ENCODE measurements at regions of chr1 and their contacts with region 1.

Region 1: GRCh38 chr1:30911046-30911954 is 2.7 kb upstream of the SDC3 start:
- DNase-seq: peak; percentile 71 to 75
- H3K4me3 ChIP-seq: no peak overlapping the region
- H3K4me3 Mint-ChIP-seq: no peak overlapping the region
- H3K27ac Mint-ChIP-seq: no peak overlapping the region
- H3K4me1 ChIP-seq: no peaks in the 10 kb centered on the region
- H3K4me1 Mint-ChIP-seq: no peaks in the 10 kb centered on the region
- H3K27me3 ChIP-seq: no peaks in the 10 kb centered on the region; the same call in 1 of the 2 replicates
- H3K27me3 Mint-ChIP-seq: no peaks in the 10 kb centered on the region
- CTCF ChIP-seq: peak; percentile 67 to 69

Region 2: GRCh38 chr1:30718636-30719405 is 192.5 kb before region 1 on chr1:
- CTCF ChIA-PET with region 1: interaction called, 10 read pairs
- POLR2A ChIA-PET with region 1: no interaction called
- intact Hi-C with region 1: loop called (anchors 1 kb)
- DNase-seq: peak in 1 of 2 experiments; percentile 90
- H3K4me3 ChIP-seq: peak overlapping the region; percentile 75
- H3K4me3 Mint-ChIP-seq: peak overlapping the region; percentile 79
- H3K27ac Mint-ChIP-seq: peak overlapping the region; percentile 87
- H3K4me1 ChIP-seq: no peaks in the 10 kb centered on the region
- H3K4me1 Mint-ChIP-seq: no peaks in the 10 kb centered on the region
- H3K27me3 ChIP-seq: no peaks in the 10 kb centered on the region
- H3K27me3 Mint-ChIP-seq: no peaks in the 10 kb centered on the region
- CTCF ChIP-seq: peak; percentile 68 to 80

Region 3: GRCh38 chr1:30779294-30780071 is 131.8 kb before region 1 on chr1:
- CTCF ChIA-PET with region 1: interaction called, 9 read pairs
- POLR2A ChIA-PET with region 1: no interaction called
- intact Hi-C with region 1: loop called (anchors 1 kb)
- DNase-seq: peak; percentile 69 to 84
- H3K4me3 ChIP-seq: no peak overlapping the region
- H3K4me3 Mint-ChIP-seq: no peak overlapping the region
- H3K27ac Mint-ChIP-seq: no peak overlapping the region
- H3K4me1 ChIP-seq: peaks cover 9% of the 10 kb centered on the region; the same call in 1 of the 2 replicates
- H3K4me1 Mint-ChIP-seq: no peaks in the 10 kb centered on the region
- H3K27me3 ChIP-seq: no peaks in the 10 kb centered on the region
- H3K27me3 Mint-ChIP-seq: peaks cover 3% of the 10 kb centered on the region
- CTCF ChIP-seq: peak; percentile 73 to 81

Region 4: GRCh38 chr1:30801771-30802198 is 109.5 kb before region 1 on chr1:
- CTCF ChIA-PET with region 1: interaction called, 42 read pairs
- POLR2A ChIA-PET with region 1: interaction called, 4 read pairs
- intact Hi-C with region 1: loop called (anchors 1 kb)
- DNase-seq: peak; percentile 60 to 79
- H3K4me3 ChIP-seq: no peak overlapping the region
- H3K4me3 Mint-ChIP-seq: no peak overlapping the region
- H3K27ac Mint-ChIP-seq: no peak overlapping the region
- H3K4me1 ChIP-seq: no peaks in the 10 kb centered on the region
- H3K4me1 Mint-ChIP-seq: no peaks in the 10 kb centered on the region
- H3K27me3 ChIP-seq: no peaks in the 10 kb centered on the region
- H3K27me3 Mint-ChIP-seq: no peaks in the 10 kb centered on the region
- CTCF ChIP-seq: peak; percentile 74

Region 5: DNA sequence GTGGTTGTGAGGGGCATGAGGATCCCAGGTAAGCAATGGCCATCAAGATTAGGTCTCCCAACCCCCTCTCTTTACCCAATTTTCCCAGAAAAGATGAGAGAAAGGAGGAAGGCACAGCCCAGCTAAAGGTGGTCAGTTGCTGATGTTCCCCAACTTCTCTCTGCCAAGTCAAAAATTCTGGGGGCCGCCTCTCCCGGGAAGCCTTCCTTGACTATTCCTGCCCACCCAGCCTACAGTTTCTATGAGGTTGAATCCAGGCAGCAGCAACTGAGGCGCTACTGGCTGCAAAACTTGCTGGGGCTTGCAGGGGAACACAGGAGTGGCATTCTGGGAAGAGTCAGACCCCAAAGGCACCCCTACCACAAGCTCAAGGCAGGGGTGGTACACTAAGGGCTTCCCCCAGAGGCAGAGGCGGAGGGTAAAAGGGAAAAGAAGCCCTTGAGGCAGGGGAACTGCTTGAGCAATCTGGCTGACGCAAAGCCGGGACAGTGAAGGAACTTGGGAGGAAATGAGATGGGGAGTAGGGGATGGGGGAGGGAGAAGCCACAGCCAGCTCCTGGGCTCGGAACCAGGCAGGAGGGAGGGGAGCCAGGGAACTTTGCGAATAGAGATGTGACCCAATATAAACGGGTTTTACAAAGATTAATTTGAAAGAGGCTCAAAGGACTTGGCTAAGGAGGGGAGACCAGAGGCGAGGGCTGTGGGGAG is 33.9 kb before region 1 on chr1:
- CTCF ChIA-PET with region 1: interaction called, 11 read pairs
- POLR2A ChIA-PET with region 1: no interaction called
- intact Hi-C with region 1: no loop called
- DNase-seq: no peak
- H3K4me3 ChIP-seq: no peak overlapping the region
- H3K4me3 Mint-ChIP-seq: no peak overlapping the region
- H3K27ac Mint-ChIP-seq: no peak overlapping the region
- H3K4me1 ChIP-seq: no peaks in the 10 kb centered on the region
- H3K4me1 Mint-ChIP-seq: no peaks in the 10 kb centered on the region
- H3K27me3 ChIP-seq: no peaks in the 10 kb centered on the region
- H3K27me3 Mint-ChIP-seq: no peaks in the 10 kb centered on the region
- CTCF ChIP-seq: no peak